Colonic mucosa (tissue), 4 donors: ENCODE measurements at regions of chr3 and their contacts with region 1.

Region 1: GRCh38 chr3:86771741-86772503 is 219.0 kb downstream of the VGLL3 start:
- DNase-seq: no peak
- H3K4me3 ChIP-seq: no peak overlapping the region
- H3K27ac ChIP-seq: no peak overlapping the region
- H3K4me1 ChIP-seq: no peaks in the 10 kb centered on the region
- H3K27me3 ChIP-seq: no peaks in the 10 kb centered on the region
- CTCF ChIP-seq: no peak

Region 2: DNA sequence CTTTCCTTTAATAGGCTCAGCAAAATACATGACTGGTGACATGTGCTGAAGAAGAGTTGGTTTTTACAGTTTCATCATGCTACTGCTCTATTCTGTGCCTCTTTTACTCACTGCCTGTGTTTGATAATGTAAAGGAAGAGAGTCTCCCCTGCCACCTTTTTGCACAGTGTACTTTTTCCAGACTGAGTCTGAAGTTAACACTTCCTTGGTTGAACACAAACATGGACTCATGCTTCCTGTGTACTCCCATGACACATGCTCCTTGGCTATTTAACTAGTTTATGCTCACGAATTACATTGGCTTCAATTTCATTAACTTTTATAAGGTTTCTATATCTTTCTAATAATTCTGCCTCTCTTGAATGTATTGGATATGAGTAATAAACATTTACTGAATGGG is 177.1 kb before region 1 on chr3:
- intact Hi-C with region 1: no loop called
- DNase-seq: no peak
- H3K4me3 ChIP-seq: no peak overlapping the region
- H3K27ac ChIP-seq: no peak overlapping the region
- H3K4me1 ChIP-seq: no peaks in the 10 kb centered on the region
- H3K27me3 ChIP-seq: no peaks in the 10 kb centered on the region
- CTCF ChIP-seq: no peak

Region 3: DNA sequence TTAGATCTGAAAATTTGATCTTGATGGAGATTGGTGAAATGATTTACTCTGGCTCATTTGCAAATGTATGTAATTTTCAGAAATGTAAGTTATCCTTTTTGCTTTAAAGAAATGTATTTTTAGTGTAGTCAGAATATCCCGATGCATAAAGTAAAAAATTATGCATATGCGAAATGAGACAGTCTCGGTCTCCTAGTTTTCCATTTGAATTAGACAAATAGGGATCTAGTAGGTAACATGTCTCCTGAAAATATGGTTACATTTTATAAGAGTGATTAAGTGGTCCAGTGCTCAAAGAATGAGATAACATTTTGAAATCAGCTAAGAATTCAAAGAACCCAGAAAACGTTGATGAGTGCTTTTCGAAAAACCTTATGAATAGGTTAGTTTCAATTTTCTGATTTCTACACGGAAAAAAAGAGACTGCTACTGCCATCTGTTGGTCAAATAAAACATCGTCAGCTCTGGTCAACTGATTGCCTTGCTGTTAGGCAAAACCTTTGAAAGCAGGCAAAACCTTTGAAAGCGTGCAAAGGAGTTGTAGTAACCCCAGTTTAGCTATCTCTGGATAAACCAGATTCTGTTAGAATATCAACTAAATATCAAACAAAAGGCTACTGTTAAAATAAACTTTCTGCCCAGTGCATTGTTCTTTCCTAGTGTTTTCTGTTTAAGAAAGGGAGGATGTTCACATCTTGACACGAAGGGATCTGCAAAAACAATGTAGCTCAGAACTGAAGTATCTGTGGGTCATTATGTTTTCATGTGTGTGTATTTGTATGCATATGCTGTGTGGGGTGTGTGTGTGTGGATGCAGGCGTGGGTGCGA is 395.9 kb after region 1 on chr3:
- intact Hi-C with region 1: loop called (anchors 2 kb)
- DNase-seq: peak; percentile 45
- H3K4me3 ChIP-seq: peak overlapping the region; percentile 9
- H3K27ac ChIP-seq: no peak overlapping the region
- H3K4me1 ChIP-seq: no peaks in the 10 kb centered on the region
- H3K27me3 ChIP-seq: no peaks in the 10 kb centered on the region
- CTCF ChIP-seq: peak; percentile 66